HEK293 (cell line): ENCODE measurements at regions of chr6 and their contacts with region 1.

Region 1: DNA sequence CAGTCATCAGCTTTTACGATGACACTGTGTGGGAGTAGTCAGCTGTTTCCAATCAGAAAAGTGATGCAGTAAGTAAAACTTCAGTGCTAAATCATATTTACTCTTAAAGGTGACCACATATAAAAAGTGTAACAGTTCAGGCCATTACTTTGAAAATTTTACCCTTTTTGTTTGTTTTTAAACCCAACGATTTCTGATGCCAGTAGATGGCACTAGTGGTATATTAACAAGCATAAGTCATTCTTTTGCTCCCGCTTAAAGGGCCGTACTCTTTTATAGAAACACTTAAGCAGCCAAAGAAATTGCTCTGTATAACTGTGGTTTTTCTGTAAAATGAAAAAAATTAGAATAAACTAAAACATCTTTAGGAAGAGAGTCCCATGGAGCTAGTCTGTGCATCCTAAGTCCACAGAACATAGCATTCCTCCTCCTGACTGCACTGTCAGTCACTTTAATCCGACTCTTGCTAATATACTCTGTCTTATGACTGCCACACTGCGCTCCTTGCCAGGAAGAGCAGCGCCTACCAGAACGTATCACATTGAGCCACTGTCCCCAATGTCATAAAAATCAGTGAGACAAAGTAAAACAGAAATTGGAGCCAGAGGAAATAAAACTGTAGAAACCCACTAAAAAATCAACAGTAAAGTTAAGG is 25.0 kb downstream of the HEBP2 start:
- H3K4me3 ChIP-seq: no peak overlapping the region
- H3K27ac ChIP-seq: no peak overlapping the region
- H3K4me1 ChIP-seq: no peaks in the 10 kb centered on the region
- CTCF ChIP-seq: peak; percentile 39

Region 2: DNA sequence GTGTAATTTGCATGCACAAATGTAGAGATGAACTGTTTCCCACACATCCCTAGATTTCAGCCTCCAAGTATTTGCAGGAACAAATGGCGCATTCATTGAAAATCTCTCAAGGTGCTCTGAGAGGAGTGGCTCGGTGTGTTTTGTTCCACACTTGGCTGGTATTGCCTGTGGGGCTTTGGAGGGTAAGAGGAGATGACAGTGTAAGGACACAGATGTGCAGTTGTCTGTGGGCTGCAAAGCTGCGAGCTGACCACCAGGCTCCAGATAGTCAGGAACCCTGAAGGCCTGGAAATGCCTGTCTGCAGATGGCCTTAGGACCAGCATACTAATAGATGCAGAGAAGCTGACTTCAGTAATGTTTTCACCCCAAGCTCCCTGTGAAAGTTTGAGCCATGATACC is 153.1 kb before region 1 on chr6:
- CTCF ChIA-PET with region 1: no interaction called
- POLR2A ChIA-PET with region 1: no interaction called
- H3K4me3 ChIP-seq: no peak overlapping the region
- H3K27ac ChIP-seq: no peak overlapping the region
- H3K4me1 ChIP-seq: no peaks in the 10 kb centered on the region
- CTCF ChIP-seq: no peak

Region 3: GRCh38 chr6:138455746-138456400 is 26.8 kb after region 1 on chr6:
- CTCF ChIA-PET with region 1: interaction called, 10 read pairs
- POLR2A ChIA-PET with region 1: no interaction called
- H3K4me3 ChIP-seq: no peak overlapping the region
- H3K27ac ChIP-seq: no peak overlapping the region
- H3K4me1 ChIP-seq: no peaks in the 10 kb centered on the region
- CTCF ChIP-seq: no peak

Region 4: DNA sequence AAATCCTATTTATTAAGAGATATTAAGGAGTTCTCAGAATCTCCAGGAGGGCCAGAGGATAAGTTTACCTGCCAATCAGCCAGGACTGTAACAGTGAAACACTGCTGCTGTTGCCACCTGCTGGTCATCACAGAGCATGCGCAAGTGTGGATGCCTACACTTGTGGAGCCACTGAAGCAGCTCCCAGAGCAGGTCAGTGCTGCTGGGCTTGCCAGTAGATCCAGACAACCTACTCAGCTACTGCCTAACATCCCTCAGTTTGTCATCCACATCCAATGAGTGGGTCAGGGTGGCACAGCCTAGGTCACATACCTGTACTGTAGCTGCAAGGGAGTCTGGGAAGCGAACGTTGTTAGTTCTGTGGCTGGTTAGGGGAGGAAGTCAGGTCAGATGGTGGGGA is 88.6 kb after region 1 on chr6:
- CTCF ChIA-PET with region 1: interaction called, 11 read pairs
- POLR2A ChIA-PET with region 1: no interaction called
- H3K4me3 ChIP-seq: no peak overlapping the region
- H3K27ac ChIP-seq: no peak overlapping the region
- H3K4me1 ChIP-seq: no peaks in the 10 kb centered on the region
- CTCF ChIP-seq: no peak

Region 5: GRCh38 chr6:138765896-138766655 is 337.0 kb after region 1 on chr6:
- CTCF ChIA-PET with region 1: interaction called, 14 read pairs
- POLR2A ChIA-PET with region 1: no interaction called
- H3K4me3 ChIP-seq: no peak overlapping the region
- H3K27ac ChIP-seq: no peak overlapping the region
- H3K4me1 ChIP-seq: no peaks in the 10 kb centered on the region
- CTCF ChIP-seq: no peak